Caco-2 (cell line): ENCODE measurements at regions of chr2 and their contacts with region 1.

Region 1: GRCh38 chr2:10434886-10435819 is 13.0 kb downstream of the ODC1 start:
- DNase-seq: peak; percentile 84 to 92
- H3K4me3 ChIP-seq: no peak overlapping the region
- H3K4me3 Mint-ChIP-seq: no peak overlapping the region
- H3K27ac Mint-ChIP-seq: peak overlapping the region; percentile 19
- H3K4me1 ChIP-seq: peaks cover 18% of the 10 kb centered on the region
- H3K4me1 Mint-ChIP-seq: peaks cover 8% of the 10 kb centered on the region
- H3K27me3 ChIP-seq: no peaks in the 10 kb centered on the region
- H3K27me3 Mint-ChIP-seq: no peaks in the 10 kb centered on the region
- CTCF ChIP-seq: peak; percentile 97 to 98

Region 2: DNA sequence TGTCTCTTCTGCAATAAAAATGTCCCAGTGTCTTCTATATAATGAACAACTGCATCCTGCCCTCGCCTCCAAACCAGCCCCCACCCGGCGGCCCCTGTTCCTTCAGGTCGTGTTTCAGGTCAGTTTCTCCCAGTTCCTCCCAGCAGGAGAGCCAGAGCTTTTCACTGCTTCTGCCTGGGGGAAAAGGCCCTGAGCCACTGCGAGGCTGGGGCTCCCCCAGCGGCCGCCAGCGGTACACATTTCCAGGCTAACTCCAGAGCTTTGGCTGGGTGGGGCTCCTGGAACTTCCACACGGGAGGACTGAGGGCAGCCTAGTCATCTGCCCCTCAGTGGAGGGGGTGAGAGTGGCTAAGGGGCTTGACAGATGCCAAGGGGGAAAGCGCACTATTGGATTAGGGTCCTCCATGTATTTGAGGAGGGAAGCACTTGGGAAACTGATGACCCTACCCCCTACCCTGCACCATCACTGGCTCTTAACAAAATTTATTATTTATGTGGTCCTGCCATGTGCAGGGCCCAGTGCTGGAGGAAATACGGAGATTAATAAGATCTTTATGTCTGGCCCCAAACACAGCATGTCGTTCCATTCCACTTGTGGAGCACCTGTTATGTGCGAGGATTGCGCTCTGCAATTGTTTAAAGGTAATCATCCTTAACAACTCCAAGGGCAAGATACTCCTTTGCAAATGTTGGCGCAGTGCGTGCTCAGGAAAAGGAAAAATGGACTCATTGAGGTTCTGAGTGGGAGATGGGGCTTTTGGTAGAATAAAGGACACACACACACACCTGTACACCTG is 337.6 kb before region 1 on chr2:
- CTCF ChIA-PET with region 1: interaction called, 11 read pairs
- POLR2A ChIA-PET with region 1: no interaction called
- intact Hi-C with region 1: no loop called
- DNase-seq: peak; percentile 78 to 85
- H3K4me3 ChIP-seq: no peak overlapping the region
- H3K4me3 Mint-ChIP-seq: no peak overlapping the region
- H3K27ac Mint-ChIP-seq: no peak overlapping the region
- H3K4me1 ChIP-seq: no peaks in the 10 kb centered on the region
- H3K4me1 Mint-ChIP-seq: no peaks in the 10 kb centered on the region
- H3K27me3 ChIP-seq: no peaks in the 10 kb centered on the region
- H3K27me3 Mint-ChIP-seq: no peaks in the 10 kb centered on the region
- CTCF ChIP-seq: peak; percentile 88 to 98

Region 3: DNA sequence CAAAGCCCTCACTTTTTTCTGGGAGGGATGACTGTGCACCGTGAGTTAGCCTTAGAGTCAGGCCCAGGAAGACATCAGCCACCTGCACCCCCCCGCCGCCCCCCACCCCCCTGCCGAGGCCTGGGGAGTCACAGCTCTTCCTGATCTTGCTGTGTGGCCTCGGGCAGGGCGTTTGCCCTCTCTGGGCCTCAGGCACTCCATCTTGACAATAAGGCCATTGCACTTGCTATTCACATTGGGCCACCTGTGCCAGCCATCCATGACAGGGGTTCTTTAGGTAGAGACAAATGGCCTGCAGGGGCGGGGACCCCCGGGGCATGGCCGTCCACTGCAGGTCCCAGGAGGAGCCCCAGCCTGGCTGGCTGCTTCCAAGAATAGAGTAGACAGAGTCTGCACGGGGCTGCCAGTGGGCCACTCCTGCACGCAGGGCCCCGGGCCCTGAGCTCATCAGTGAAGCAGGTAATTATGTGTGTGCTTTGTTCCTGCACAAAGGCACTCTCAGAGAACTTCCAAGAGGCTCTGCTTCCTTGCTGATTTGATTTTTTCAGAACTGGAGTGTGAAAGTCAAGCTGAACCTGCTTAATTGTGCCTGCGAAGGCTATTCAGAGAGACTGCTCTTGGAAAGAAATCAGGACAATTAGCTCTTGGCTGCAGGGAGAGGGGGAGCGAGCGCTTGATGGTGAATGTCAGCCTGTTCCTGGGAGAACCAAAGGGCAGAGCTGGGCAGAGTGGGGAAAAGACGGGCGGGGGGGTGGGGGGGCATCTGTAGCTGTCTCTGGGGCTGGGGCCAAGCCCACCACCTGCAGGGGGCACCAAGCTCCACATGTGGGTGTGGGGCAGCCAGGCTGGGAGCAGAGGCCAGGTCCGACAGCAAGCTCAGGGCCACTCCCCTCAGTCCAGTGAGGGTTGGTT is 272.3 kb before region 1 on chr2:
- CTCF ChIA-PET with region 1: interaction called, 14 read pairs
- POLR2A ChIA-PET with region 1: no interaction called
- intact Hi-C with region 1: no loop called
- DNase-seq: peak in 1 of 2 experiments; percentile 72
- H3K4me3 ChIP-seq: no peak overlapping the region
- H3K4me3 Mint-ChIP-seq: no peak overlapping the region
- H3K27ac Mint-ChIP-seq: no peak overlapping the region
- H3K4me1 ChIP-seq: peaks cover 8% of the 10 kb centered on the region
- H3K4me1 Mint-ChIP-seq: peaks cover 7% of the 10 kb centered on the region
- H3K27me3 ChIP-seq: no peaks in the 10 kb centered on the region
- H3K27me3 Mint-ChIP-seq: no peaks in the 10 kb centered on the region
- CTCF ChIP-seq: peak; percentile 42 to 47

Region 4: DNA sequence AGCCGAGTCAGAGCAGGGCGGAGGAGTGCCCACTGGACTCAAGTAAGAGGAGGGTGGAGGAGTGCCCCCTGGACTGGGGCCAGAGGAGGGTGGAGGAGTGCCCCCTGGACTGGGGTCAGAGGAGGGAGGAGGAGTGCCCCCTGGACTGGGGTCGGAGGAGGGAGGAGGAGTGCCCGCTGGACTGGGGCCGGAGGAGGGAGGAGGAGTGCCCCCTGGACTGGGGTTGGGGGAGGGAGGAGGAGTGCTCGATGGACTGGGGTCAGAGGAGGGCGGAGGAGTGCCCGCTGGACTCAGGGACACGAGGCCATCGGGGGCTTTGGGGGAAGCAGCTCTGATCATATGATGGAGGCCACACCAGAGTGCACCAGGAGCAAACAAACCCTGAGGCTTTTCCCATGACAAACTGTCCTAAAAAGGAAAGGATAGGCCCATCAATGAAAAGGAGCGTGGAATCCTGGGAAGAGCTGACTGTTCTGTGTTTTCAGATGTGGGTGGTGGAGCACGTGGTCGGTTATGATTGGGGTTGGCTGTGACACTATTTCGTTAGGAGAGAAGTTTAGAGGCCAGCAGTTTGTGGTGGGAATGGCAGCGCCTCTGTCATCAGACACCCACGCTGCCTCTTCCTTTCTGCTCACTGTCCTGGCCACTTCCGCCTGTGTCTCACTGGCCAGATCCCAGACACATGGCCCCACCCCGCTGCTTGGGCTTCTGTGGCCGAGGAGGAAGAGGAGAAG is 157.0 kb before region 1 on chr2:
- CTCF ChIA-PET with region 1: no interaction called
- POLR2A ChIA-PET with region 1: no interaction called
- intact Hi-C with region 1: loop called (anchors 10 kb)
- DNase-seq: no peak
- H3K4me3 ChIP-seq: no peak overlapping the region
- H3K4me3 Mint-ChIP-seq: no peak overlapping the region
- H3K27ac Mint-ChIP-seq: peak overlapping the region; percentile 16
- H3K4me1 ChIP-seq: peaks cover 11% of the 10 kb centered on the region; the same call in 1 of the 2 replicates
- H3K4me1 Mint-ChIP-seq: peaks cover 10% of the 10 kb centered on the region
- H3K27me3 ChIP-seq: no peaks in the 10 kb centered on the region; the same call in 1 of the 2 replicates
- H3K27me3 Mint-ChIP-seq: no peaks in the 10 kb centered on the region
- CTCF ChIP-seq: no peak

Region 5: DNA sequence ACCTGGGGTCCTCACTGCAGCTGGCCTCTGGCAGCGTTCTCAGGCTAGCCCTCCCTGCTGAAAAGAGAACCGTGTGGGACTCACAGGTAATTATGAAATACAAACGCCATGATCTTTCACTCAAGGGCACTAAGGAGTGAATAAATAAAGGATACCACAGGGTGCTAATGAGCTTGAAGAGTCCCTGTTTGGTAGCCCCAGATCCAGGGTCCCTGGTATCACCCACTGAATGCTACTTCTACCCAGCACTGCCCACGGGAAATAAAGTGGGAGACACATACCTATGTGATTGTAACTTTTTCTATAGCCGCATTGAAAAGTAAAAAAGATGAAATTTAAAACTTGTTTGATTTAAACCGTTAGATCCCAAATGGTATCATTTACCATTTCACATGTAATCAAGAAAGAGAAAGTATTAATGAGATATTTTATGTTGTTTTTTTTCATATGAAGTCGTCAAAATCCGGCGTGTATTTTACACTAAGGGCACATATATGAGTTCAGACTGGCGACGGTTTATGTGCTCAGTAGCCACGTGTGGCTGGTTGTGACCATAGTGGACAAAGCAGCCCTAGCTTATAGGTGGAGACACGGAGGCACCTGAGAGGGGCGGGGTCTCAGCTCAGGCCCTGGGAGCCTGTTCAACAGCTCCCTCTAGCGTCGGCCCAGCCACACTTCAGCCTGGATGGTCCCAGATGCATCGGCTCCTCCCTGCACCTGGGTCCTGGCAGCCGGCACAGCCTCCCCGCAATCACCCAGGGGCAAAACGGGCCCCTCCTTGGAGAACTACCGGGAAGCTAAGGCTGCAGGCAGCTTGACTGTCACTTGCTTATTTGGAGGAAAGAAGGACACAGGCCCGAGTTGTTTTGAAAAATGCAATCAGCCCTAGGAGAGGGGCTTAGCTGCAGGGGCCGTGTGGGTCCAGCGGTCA is 26.2 kb before region 1 on chr2:
- CTCF ChIA-PET with region 1: interaction called, 60 read pairs
- POLR2A ChIA-PET with region 1: interaction called, 8 read pairs
- intact Hi-C with region 1: no loop called
- DNase-seq: peak; percentile 91 to 95
- H3K4me3 ChIP-seq: no peak overlapping the region
- H3K4me3 Mint-ChIP-seq: peak overlapping the region; percentile 47
- H3K27ac Mint-ChIP-seq: peak overlapping the region; percentile 65
- H3K4me1 ChIP-seq: peaks cover 13% of the 10 kb centered on the region
- H3K4me1 Mint-ChIP-seq: peaks cover 20% of the 10 kb centered on the region
- H3K27me3 ChIP-seq: no peaks in the 10 kb centered on the region
- H3K27me3 Mint-ChIP-seq: no peaks in the 10 kb centered on the region
- CTCF ChIP-seq: peak; percentile 96 to 97

Region 6: DNA sequence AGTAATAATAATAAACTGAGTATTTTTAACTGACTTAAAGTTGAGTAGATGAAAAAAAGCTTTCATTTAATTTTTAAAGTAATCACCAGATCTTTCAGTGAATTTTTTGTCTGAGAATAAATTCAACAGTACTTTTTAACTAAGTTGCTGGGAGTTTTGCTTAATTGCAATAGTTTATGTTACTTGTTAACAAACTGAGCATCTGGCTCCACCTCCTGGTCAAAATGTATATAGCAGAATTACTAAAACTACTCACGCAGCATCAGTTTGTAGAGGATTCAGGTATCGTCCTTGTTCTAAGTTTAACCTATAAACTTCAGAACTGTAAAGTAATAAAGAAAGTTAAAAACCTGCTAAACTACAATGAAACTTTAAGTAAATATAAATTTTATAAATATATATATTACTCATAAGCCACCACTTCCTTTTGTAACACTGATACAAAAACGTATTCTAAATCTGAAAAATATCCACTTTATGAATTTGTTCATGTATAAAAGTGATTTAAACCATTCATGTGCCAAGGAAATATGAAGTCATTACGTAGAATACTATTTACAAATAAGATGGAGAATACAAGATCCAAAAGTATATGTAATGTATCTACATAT is 233.4 kb after region 1 on chr2:
- CTCF ChIA-PET with region 1: no interaction called
- POLR2A ChIA-PET with region 1: no interaction called
- intact Hi-C with region 1: loop called (anchors 2 kb)
- DNase-seq: peak in 1 of 2 experiments; percentile 71
- H3K4me3 ChIP-seq: no peak overlapping the region
- H3K4me3 Mint-ChIP-seq: no peak overlapping the region
- H3K27ac Mint-ChIP-seq: no peak overlapping the region
- H3K4me1 ChIP-seq: no peaks in the 10 kb centered on the region
- H3K4me1 Mint-ChIP-seq: no peaks in the 10 kb centered on the region
- H3K27me3 ChIP-seq: no peaks in the 10 kb centered on the region
- H3K27me3 Mint-ChIP-seq: no peaks in the 10 kb centered on the region
- CTCF ChIP-seq: peak; percentile 63 to 81